Stomach (tissue), 19 donors: ENCODE measurements at regions of chr6 and their contacts with region 1.

Region 1: DNA sequence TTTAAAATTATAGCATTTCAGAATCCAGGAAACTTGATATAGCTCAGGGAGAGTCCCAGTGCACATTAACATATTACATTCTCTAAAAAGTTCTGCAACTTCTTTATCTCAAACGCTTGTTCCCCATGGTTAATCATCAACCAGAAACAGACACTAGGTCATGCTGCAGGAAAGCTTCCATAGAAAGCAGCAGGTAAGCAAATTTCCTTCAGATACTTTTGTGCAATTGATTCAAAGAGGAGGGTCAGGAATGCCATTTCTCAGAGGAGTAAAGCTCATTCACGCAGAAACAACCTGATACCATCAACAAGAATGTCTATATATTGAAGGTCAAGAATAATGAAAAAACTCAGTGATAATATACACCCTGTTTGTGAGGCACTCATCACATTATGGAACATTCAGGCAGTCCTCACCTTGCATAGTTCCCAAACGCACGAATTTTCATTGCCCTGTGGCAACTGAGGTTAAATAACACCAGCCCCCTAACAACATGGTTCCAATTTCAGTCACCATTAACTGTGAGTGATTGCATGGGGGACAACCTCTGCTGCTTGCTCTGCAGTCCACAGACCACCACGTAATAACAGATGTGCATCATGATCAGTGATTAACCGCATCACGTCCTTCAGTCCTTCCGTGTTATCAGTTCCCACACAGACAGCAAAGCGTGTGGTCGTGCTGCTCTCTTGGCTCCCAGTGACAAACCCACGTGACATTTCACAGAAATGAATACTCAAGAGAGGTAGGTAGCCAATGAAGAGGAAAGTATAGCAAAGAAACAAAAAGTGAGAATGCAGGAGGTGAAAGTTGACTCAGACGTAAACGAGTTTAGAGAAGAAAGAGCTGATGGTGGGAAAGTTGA is 95.7 kb downstream of the LY86 start:
- DNase-seq: peak in 1 of 2 donors; percentile 66
- H3K4me3 ChIP-seq: no peak overlapping the region
- H3K27ac ChIP-seq: peak overlapping the region; percentile 27 to 81 (median 66)
- H3K4me1 ChIP-seq: peaks cover 18 to 74% (median 59%) of the 10 kb centered on the region in 4 donors
- H3K27me3 ChIP-seq: no peaks in the 10 kb centered on the region
- CTCF ChIP-seq: no peak
- EP300 ChIP-seq: no peak
- POLR2A ChIP-seq: no peak

Region 2: DNA sequence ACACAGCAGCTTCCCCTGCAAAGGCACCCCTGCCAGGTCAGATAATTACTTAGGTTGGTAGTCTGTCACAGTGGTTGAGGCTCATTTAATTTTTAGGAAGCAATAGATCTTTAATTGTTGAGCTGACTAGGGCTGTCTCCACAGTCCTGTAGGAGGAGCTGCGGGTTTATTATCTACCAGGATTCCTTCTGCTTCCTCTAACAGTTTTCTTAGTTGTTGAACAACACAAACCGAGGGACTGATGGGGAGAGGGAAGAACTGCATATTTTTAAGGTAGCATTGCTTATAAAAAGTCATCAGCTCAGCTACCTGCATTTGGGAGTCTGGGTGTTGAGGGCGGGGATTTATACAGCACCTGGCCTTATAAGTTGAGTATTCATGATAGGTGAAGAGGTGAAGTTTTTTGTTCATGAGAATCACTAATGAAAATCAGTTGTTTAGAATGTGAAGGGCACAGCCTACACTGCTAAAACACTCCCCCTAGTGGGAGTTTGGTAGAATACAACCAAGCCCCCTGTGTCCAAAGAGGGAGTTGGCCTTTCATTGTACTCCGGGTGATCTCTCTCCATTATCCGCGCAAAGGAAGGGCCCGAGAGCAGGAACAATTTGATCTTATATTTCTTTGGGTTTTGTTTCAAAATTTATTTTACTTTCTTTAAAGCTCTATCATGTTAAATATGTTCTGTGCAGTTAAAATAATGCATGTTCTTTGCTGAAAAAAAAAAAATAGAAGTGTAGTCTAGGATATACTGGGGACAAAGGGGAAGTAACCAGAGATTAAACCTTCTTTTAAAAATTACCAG is 559.2 kb after region 1 on chr6:
- intact Hi-C with region 1: loop called (anchors 5 kb)
- DNase-seq: peak in 1 of 2 donors; percentile 85
- H3K4me3 ChIP-seq: no peak overlapping the region
- H3K27ac ChIP-seq: peak overlapping the region; percentile 73 to 89 (median 77)
- H3K4me1 ChIP-seq: peaks cover 38 to 58% (median 48%) of the 10 kb centered on the region in 4 donors
- H3K27me3 ChIP-seq: no peaks in the 10 kb centered on the region
- CTCF ChIP-seq: peak in 5 of 7 experiments; percentile 70 to 88 (median 86)
- EP300 ChIP-seq: no peak
- POLR2A ChIP-seq: no peak